ENCODE measurements at regions of chrX and their contacts with region 1.

Region 1: GRCh38 chrX:17689971-17690409 is 47.3 kb upstream of the SCML1 start:
- DNase-seq: peak; percentile 7
- H3K4me3 Mint-ChIP-seq: no peak overlapping the region
- H3K27ac Mint-ChIP-seq: no peak overlapping the region
- H3K4me1 Mint-ChIP-seq: no peaks in the 10 kb centered on the region
- H3K27me3 Mint-ChIP-seq: peaks cover 2% of the 10 kb centered on the region

Region 2: GRCh38 chrX:16033331-16033730 is 1656.7 kb before region 1 on chrX:
- intact Hi-C with region 1: no loop called
- DNase-seq: no peak
- H3K4me3 Mint-ChIP-seq: no peak overlapping the region
- H3K27ac Mint-ChIP-seq: no peak overlapping the region
- H3K4me1 Mint-ChIP-seq: no peaks in the 10 kb centered on the region
- H3K27me3 Mint-ChIP-seq: peaks cover 4% of the 10 kb centered on the region

Region 3: GRCh38 chrX:17374619-17375366 is 315.2 kb before region 1 on chrX and contains the start of gene NHS:
- intact Hi-C with region 1: loop called (anchors 10 kb)
- DNase-seq: no peak
- H3K4me3 Mint-ChIP-seq: no peak within 1 kb of the TSS
- H3K27ac Mint-ChIP-seq: no peak within 1 kb of the TSS
- H3K4me1 Mint-ChIP-seq: peaks cover 6% of the 10 kb centered on the region
- H3K27me3 Mint-ChIP-seq: peaks cover 13% of the 10 kb centered on the region
- total RNA-seq, gene NHS: 8.1 and 11.1 TPM in 2 replicates

Region 4: DNA sequence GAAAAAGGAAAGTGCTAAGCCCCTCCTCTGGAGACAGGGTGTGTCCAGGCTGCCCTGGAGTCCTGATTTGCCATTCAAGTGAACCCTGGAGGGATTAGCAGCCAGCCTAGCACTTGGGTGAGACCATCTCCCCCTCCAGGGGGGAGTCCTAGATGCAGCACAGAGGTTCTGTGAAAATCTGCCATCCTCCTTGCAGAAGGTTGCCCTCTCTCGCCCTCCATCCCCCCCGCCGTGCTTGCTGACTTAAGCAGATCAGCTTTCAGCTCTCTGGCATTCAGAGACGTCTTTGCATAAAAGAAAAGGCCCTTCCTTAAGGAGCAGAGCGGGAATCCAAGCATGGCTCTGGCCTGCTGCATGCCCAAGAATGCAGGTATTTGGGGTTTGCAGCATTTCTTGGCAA is 54.8 kb before region 1 on chrX:
- intact Hi-C with region 1: loop called (anchors 10 kb)
- DNase-seq: no peak
- H3K4me3 Mint-ChIP-seq: no peak overlapping the region
- H3K27ac Mint-ChIP-seq: no peak overlapping the region
- H3K4me1 Mint-ChIP-seq: peaks cover 9% of the 10 kb centered on the region
- H3K27me3 Mint-ChIP-seq: no peaks in the 10 kb centered on the region

Region 5: GRCh38 chrX:18938710-18939109 is 1248.7 kb after region 1 on chrX:
- intact Hi-C with region 1: no loop called
- DNase-seq: no peak
- H3K4me3 Mint-ChIP-seq: no peak overlapping the region
- H3K27ac Mint-ChIP-seq: no peak overlapping the region
- H3K4me1 Mint-ChIP-seq: no peaks in the 10 kb centered on the region
- H3K27me3 Mint-ChIP-seq: no peaks in the 10 kb centered on the region

Measured in activated T-helper 1 cell treated with anti-CD3 and anti-CD28 coated beads, Interleukin-12 subunit alpha, Interleukin-12 subunit beta, Interleukin-2, Interleukin-4 antibody, amounts not matched to agents 30 ng/mL and 10 ng/mL and 1 ng/mL, durations not matched to agents 14 hours and 24 hours and 36 hours (primary cell).